ENCODE measurements at regions of chrX and their contacts with region 1.

Region 1: GRCh38 chrX:132226169-132226568 is 6.9 kb upstream of the RAP2C start:
- DNase-seq: no peak
- ATAC-seq: no peak
- H3K4me3 ChIP-seq: no peak overlapping the region
- H3K27ac ChIP-seq: no peak overlapping the region
- H3K4me1 ChIP-seq: no peaks in the 10 kb centered on the region
- H3K27me3 ChIP-seq: peaks cover 0 to 21% (median 0%) of the 10 kb centered on the region in 9 donors
- CTCF ChIP-seq: peak in 8 of 12 donors; percentile 11 to 38 (median 28)
- POLR2A ChIP-seq: no peak

Region 2: GRCh38 chrX:131987252-131987651 is 238.9 kb before region 1 on chrX:
- intact Hi-C with region 1: no loop called
- DNase-seq: no peak
- ATAC-seq: no peak
- H3K4me3 ChIP-seq: peak overlapping the region in 1 of 12 donors; percentile 15
- H3K27ac ChIP-seq: peak overlapping the region in 1 of 12 donors; percentile 73
- H3K4me1 ChIP-seq: peaks cover 0 to 22% (median 0%) of the 10 kb centered on the region in 12 donors
- H3K27me3 ChIP-seq: peaks cover 0 to 39% (median 0%) of the 10 kb centered on the region in 9 donors
- CTCF ChIP-seq: no peak
- POLR2A ChIP-seq: no peak

Region 3: GRCh38 chrX:132375934-132376333 is 149.8 kb after region 1 on chrX:
- intact Hi-C with region 1: no loop called
- DNase-seq: no peak
- ATAC-seq: no peak
- H3K4me3 ChIP-seq: no peak overlapping the region
- H3K27ac ChIP-seq: no peak overlapping the region
- H3K4me1 ChIP-seq: no peaks in the 10 kb centered on the region
- H3K27me3 ChIP-seq: peaks cover 0 to 24% (median 0%) of the 10 kb centered on the region in 9 donors
- CTCF ChIP-seq: peak in 1 of 12 donors; percentile 3
- POLR2A ChIP-seq: no peak

Region 4: DNA sequence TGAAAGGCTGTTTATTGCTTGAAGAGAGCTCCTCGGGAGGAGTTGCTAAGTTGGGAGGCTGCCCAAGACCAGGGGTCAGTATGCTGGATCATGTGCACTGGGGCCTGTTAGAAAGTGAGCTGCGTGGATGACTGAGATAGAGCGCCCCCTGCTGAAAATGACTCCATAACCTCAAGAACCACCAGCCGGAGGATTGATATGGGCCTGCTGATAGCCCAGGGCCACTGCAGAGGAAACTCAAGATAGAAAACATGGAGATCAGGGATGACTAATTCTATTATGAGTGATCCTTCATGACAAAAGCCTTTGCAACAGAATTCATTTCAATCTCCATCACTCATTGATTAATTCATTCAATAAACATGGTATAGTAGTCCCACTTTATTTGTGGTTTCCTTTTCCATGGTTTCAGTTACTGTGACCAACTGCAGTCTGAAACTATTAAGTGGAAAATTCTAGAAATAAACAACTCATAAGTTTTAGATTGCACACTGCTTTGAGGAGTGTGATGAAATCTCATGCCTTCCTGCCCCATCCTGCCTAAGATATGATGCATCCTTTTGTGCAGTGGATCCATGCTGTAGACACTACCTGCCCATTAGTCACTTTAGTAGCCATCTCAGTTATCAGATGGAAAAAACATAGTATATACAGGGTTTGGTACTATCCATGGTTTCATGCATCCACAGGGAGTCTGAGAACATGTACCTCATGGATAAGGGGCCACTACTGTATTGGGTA is 389.4 kb after region 1 on chrX:
- intact Hi-C with region 1: loop called in 5 of 10 experiments (anchors 5 to 10 kb)
- DNase-seq: peak in 3 of 5 donors; percentile 8 to 40 (median 19)
- ATAC-seq: no peak
- H3K4me3 ChIP-seq: no peak overlapping the region
- H3K27ac ChIP-seq: no peak overlapping the region
- H3K4me1 ChIP-seq: no peaks in the 10 kb centered on the region
- H3K27me3 ChIP-seq: peaks cover 0 to 32% (median 0%) of the 10 kb centered on the region in 9 donors
- CTCF ChIP-seq: peak; percentile 5 to 48 (median 34)
- POLR2A ChIP-seq: no peak

Region 5: DNA sequence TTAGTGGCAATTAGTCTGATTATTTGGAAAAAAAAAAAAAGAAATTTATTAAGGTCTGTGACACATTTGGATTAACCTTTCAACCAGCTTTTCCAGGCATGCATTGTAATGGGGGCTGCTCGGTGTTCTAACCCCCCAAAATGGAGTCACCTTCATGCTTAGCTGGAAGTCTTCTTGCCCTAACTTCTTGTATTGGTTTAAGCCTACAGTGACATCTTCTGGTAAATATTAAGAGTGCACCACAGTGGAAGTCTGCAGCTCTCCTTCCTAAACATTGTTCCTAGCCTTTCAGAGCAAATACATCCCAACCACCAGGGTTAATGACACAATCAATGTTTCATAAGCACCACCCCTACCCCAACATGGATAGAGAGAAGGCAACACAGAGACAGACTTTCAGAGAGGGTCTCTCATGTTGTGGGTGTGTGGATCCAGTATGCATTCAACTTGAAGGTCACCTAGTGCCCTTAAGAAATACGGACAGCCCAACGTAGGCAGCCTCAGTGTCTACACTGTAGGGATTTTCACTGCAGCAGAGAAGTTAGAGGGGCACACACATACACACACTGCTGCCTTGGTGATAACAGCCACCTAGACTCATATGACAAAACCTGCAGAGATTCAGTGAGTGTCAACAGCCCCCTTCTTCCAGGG is 405.5 kb after region 1 on chrX:
- intact Hi-C with region 1: loop called in 1 of 10 experiments (anchors 5 kb)
- DNase-seq: no peak
- ATAC-seq: peak in 2 of 4 donors; percentile 49 to 58
- H3K4me3 ChIP-seq: no peak overlapping the region
- H3K27ac ChIP-seq: no peak overlapping the region
- H3K4me1 ChIP-seq: no peaks in the 10 kb centered on the region
- H3K27me3 ChIP-seq: peaks cover 0 to 7% (median 0%) of the 10 kb centered on the region in 9 donors
- CTCF ChIP-seq: peak in 11 of 12 donors; percentile 26 to 55 (median 46)
- POLR2A ChIP-seq: no peak